ENCODE measurements at regions of chr3 and their contacts with region 1.

Region 1: GRCh38 chr3:128787256-128788240 is 61.6 kb downstream of the RAB7A start:
- DNase-seq: no peak
- H3K4me3 Mint-ChIP-seq: peak overlapping the region; percentile 70
- H3K27ac Mint-ChIP-seq: peak overlapping the region; percentile 97
- H3K4me1 Mint-ChIP-seq: peaks cover 83% of the 10 kb centered on the region
- H3K27me3 Mint-ChIP-seq: no peaks in the 10 kb centered on the region

Region 2: GRCh38 chr3:128763967-128764366 is 23.6 kb before region 1 on chr3:
- intact Hi-C with region 1: loop called (anchors 2 kb)
- DNase-seq: no peak
- H3K4me3 Mint-ChIP-seq: no peak overlapping the region
- H3K27ac Mint-ChIP-seq: peak overlapping the region; percentile 18
- H3K4me1 Mint-ChIP-seq: peaks cover 44% of the 10 kb centered on the region
- H3K27me3 Mint-ChIP-seq: no peaks in the 10 kb centered on the region

Region 3: GRCh38 chr3:128922804-128923459 is 135.4 kb after region 1 on chr3:
- intact Hi-C with region 1: loop called (anchors 1 kb)
- DNase-seq: peak; percentile 46
- H3K4me3 Mint-ChIP-seq: peak overlapping the region; percentile 67
- H3K27ac Mint-ChIP-seq: peak overlapping the region; percentile 70
- H3K4me1 Mint-ChIP-seq: peaks cover 37% of the 10 kb centered on the region
- H3K27me3 Mint-ChIP-seq: peaks cover 4% of the 10 kb centered on the region

Measured in activated T-helper 1 cell treated with anti-CD3 and anti-CD28 coated beads, Interleukin-12 subunit alpha, Interleukin-12 subunit beta, Interleukin-2, Interleukin-4 antibody, amounts not matched to agents 30 ng/mL and 10 ng/mL and 1 ng/mL, durations not matched to agents 14 hours and 24 hours and 36 hours (primary cell).